HepG2 (cell line): ENCODE measurements at regions of chr20 and their contacts with region 1.

Region 1: GRCh38 chr20:40962730-40963504 is 65.7 kb upstream of the TOP1 start:
- DNase-seq: peak; percentile 72
- ATAC-seq: peak; percentile 90
- H3K4me3 ChIP-seq: peak overlapping the region in 2 of 3 experiments; percentile 17 to 62; a peak in 2 of 6 replicates
- H3K27ac ChIP-seq: no peak overlapping the region
- H3K4me1 ChIP-seq: peaks cover 22% of the 10 kb centered on the region
- H3K27me3 ChIP-seq: peaks cover 2 to 5% of the 10 kb centered on the region in 2 experiments; a peak in 1 of 5 replicates
- CTCF ChIP-seq: peak; percentile 93
- EP300 ChIP-seq: no peak
- POLR2A ChIP-seq: no peak
- RAD21 ChIP-seq: peak; percentile 94

Region 2: GRCh38 chr20:40160097-40160550 is 802.8 kb before region 1 on chr20:
- CTCF ChIA-PET with region 1: no interaction called
- POLR2A ChIA-PET with region 1: no interaction called
- in situ Hi-C with region 1: no loop called
- intact Hi-C with region 1: loop called (anchors 5 kb)
- DNase-seq: peak; percentile 60
- ATAC-seq: peak; percentile 99
- H3K4me3 ChIP-seq: no peak overlapping the region
- H3K27ac ChIP-seq: no peak overlapping the region
- H3K4me1 ChIP-seq: no peaks in the 10 kb centered on the region
- H3K27me3 ChIP-seq: no peaks in the 10 kb centered on the region
- CTCF ChIP-seq: peak; percentile 73
- EP300 ChIP-seq: no peak
- POLR2A ChIP-seq: no peak
- RAD21 ChIP-seq: no peak

Region 3: DNA sequence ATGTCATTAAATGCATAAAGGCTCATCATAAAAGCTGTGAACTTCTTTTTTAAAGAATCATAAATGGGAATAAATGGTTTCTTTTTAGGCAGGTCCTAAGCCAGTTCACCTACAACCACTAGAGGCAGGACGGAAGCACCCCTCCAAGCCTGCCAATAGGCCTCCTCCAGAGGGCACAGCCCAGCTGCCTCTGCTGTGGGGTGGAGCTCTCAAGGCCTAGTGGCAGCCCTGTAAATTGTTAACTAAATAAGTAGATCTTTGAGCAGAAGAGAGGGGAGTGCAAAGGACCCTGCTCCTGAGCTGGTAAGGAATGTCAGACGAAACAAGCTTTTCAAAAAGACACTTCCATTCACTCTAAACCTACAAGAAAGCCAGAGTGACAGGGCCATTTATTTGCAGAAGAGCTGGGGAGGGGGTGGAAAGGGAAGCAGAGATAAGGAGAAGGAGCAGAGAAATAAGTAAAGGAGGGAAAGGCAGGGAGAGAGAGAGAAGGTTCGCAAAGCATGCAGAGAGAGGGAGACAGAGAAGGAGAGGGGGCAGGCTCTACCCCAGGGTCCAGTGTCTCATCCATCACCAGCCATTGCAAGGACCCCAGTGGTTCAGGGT is 255.8 kb before region 1 on chr20:
- CTCF ChIA-PET with region 1: interaction called, 5 read pairs
- POLR2A ChIA-PET with region 1: no interaction called
- in situ Hi-C with region 1: no loop called
- intact Hi-C with region 1: loop called (anchors 1 kb)
- DNase-seq: peak; percentile 91
- ATAC-seq: peak; percentile 100
- H3K4me3 ChIP-seq: peak overlapping the region in 2 of 3 experiments; percentile 3 to 32; a peak in 2 of 6 replicates
- H3K27ac ChIP-seq: peak overlapping the region; percentile 19
- H3K4me1 ChIP-seq: peaks cover 21% of the 10 kb centered on the region
- H3K27me3 ChIP-seq: peaks cover 0 to 7% of the 10 kb centered on the region in 2 experiments; a peak in 2 of 5 replicates
- CTCF ChIP-seq: peak; percentile 65
- EP300 ChIP-seq: no peak; a peak in 2 of 4 replicates
- POLR2A ChIP-seq: no peak
- RAD21 ChIP-seq: peak; percentile 68; the same call in 1 of the 2 replicates

Region 4: GRCh38 chr20:40741507-40742106 is 221.3 kb before region 1 on chr20:
- CTCF ChIA-PET with region 1: interaction called, 9 read pairs
- POLR2A ChIA-PET with region 1: no interaction called
- in situ Hi-C with region 1: no loop called
- intact Hi-C with region 1: loop called (anchors 1 kb)
- DNase-seq: peak; percentile 57
- ATAC-seq: peak; percentile 86
- H3K4me3 ChIP-seq: no peak overlapping the region
- H3K27ac ChIP-seq: no peak overlapping the region
- H3K4me1 ChIP-seq: no peaks in the 10 kb centered on the region
- H3K27me3 ChIP-seq: peaks cover 3 to 32% of the 10 kb centered on the region in 2 experiments; a peak in 3 of 5 replicates
- CTCF ChIP-seq: peak; percentile 83
- EP300 ChIP-seq: no peak
- POLR2A ChIP-seq: no peak
- RAD21 ChIP-seq: peak; percentile 59

Region 5: DNA sequence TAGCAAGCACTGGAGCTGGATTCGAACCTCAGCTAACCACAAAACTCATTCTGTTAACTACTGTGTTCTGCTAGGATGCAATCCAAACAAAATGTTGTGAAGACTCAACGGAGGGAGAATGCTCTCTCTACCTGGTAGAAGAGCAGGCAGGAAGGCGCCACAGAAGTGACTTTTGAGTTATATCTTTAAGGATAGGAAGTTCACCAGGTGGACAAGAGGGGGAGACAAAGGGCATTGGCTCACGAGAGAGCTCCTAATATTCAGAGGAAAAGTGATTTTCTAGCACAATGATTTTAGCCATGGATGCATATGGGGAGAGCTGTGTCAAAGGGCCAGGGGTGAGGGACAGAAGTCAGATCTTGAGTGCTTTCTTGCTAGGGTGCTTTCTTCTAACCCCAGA is 165.5 kb before region 1 on chr20:
- CTCF ChIA-PET with region 1: interaction called, 11 read pairs
- POLR2A ChIA-PET with region 1: no interaction called
- in situ Hi-C with region 1: no loop called
- intact Hi-C with region 1: loop called (anchors 1 kb)
- DNase-seq: peak; percentile 41
- ATAC-seq: peak; percentile 87
- H3K4me3 ChIP-seq: no peak overlapping the region
- H3K27ac ChIP-seq: no peak overlapping the region
- H3K4me1 ChIP-seq: no peaks in the 10 kb centered on the region
- H3K27me3 ChIP-seq: no peaks in the 10 kb centered on the region
- CTCF ChIP-seq: peak; percentile 68
- EP300 ChIP-seq: no peak
- POLR2A ChIP-seq: no peak
- RAD21 ChIP-seq: no peak

Region 6: DNA sequence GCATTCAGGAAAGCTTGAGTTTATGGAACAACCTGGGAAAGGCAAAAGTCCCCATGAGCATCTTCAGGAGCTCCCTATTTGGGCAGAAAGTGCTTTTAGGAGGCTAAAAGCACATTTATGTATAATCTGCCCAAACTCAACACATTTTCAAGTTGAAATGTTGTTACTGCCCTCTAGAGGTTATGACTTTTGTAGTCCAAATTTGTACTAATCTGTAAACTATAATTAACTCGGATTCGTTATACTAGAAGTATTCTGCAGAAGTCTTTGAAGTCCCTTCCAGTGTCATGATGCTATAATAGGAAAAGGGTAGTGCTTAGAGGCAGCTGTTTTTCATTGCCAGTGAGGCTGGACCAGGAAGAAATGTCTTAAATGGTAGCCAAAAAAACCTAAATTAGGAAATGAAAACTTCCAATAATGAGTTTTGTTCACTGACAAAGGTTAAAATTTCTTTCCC is 448.5 kb after region 1 on chr20:
- CTCF ChIA-PET with region 1: no interaction called
- POLR2A ChIA-PET with region 1: no interaction called
- in situ Hi-C with region 1: no loop called
- intact Hi-C with region 1: loop called (anchors 5 kb)
- DNase-seq: no peak
- ATAC-seq: no peak
- H3K4me3 ChIP-seq: no peak overlapping the region
- H3K27ac ChIP-seq: no peak overlapping the region
- H3K4me1 ChIP-seq: no peaks in the 10 kb centered on the region
- H3K27me3 ChIP-seq: no peaks in the 10 kb centered on the region
- CTCF ChIP-seq: peak; percentile 42
- EP300 ChIP-seq: no peak
- POLR2A ChIP-seq: no peak
- RAD21 ChIP-seq: peak; percentile 17; the same call in 1 of the 2 replicates